Astrocyte of the spinal cord (primary cell): ENCODE measurements at regions of chr6 and their contacts with region 1.

Region 1: DNA sequence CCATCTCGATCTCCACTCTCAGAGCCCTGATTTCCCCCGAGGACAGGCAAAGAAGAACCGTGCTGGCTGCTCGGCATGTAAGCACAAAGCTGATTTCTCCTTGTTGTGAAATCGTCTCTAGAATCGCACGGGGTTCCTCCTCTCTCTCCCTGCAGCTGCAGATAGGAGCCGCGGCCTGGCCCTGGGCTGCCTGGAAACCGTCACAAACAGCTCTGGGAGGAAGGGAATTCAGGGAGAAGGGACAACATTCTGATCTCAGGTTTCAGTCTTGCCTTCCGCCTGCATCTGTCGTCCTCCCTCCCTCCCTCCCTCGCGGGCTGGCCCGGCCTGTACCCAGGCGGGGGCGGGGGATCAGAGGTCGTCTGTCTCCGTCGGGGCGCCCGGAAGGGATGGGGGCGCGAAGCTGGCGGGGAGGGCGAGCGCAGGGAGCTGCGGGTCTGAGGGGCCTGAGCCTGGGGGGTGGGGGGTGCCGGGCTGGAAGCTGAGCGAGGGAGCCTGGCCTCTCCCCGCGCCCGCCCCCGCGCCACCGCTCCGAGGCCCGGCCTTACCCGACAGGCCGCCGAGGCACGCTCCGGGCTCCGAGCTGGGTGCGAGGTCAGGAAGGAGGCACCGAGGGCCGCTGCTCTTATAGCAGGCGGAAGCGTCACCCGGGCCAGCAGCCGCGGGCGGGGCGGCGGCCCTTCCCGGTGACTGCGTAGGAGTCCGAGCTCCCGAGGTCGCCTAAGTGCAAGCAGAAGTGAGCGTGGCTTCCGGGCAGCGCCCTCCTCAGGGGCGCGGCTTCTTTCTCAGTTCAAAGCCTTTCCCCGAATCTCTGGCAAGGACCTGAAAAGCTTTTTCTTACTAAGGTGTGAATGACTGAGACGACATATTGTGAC is at the start of gene SERPINB1:
- DNase-seq: peak; percentile 89
- H3K4me3 ChIP-seq: peak within 1 kb of the TSS; percentile 28
- CTCF ChIP-seq: no peak

Region 2: DNA sequence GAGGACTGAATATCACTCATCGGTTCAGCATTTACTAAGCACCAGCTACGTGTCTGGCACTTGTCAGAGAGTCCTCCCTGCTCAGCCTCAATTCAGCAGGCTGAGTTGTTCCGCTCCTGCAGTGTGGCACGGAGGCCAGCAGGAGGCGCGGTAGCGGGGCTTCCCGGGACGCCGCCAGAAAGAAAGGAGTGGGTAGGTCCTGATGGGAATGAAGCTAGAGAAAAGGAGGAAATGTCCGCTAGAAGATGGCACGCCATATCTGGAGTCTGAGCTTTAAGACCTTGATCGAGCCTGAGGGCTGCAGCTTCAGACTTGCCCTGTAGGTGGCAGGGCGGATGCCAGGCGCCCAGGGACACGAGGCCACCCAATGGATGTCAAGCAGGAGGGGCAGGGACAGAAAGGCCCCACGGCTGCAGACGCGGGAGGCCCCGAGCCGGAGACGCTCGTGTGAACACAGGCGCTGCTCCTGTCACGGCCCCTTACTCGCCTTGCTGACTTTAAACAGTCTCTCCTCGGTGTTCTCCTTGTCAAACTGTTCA is 111.1 kb after region 1 on chr6:
- in situ Hi-C with region 1: no loop called
- DNase-seq: peak; percentile 83
- H3K4me3 ChIP-seq: no peak overlapping the region
- CTCF ChIP-seq: peak; percentile 99

Region 3: GRCh38 chr6:2988426-2989331 is 147.2 kb after region 1 on chr6:
- in situ Hi-C with region 1: loop called (anchors 25 kb)
- DNase-seq: peak; percentile 95
- H3K4me3 ChIP-seq: peak overlapping the region; percentile 65
- CTCF ChIP-seq: peak; percentile 72

Region 4: GRCh38 chr6:3176562-3177355 is 335.3 kb after region 1 on chr6:
- in situ Hi-C with region 1: no loop called
- DNase-seq: peak; percentile 91
- H3K4me3 ChIP-seq: no peak overlapping the region
- CTCF ChIP-seq: no peak